ENCODE measurements at regions of chr17 and their contacts with region 1.

Region 1: DNA sequence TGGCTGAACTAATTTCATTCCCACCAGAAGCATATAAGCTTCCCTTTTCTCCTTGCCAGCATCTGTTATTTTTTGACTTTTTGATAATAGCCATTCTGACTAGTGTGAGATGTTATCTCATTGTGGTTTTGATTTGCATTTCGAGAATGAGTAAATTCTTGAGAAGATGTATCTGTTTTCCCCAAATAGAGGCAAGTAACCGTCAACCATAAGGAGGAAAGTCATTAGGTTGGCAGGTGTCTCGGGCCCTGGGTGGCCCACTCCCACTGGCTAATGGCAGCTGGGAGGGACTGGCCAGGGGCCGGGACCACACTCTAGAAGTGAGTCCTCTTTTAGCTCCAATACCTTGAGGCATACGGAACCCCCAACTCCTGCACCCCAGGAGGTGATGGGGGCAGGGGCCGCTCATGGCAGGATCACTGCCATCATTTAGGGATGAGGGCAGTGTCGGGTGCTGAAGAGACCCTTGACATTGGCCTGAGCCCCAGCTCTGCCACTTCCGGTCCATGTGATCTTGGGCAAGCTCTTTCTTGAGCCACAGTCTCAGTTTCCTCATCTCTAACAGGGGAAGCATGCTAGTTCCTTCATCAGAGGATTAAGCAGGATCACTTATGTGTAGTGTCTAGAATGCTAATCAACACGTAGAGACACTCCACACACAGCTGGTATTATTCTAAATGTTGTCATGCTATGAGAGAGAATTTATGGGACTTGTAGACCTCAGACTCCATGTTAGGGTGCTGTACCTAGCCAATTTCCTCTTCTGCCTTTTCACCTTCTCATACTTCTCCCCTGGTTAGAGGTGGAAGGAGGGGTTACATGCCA is 44.3 kb downstream of the RGS9 start:
- DNase-seq: peak; percentile 69
- H3K4me3 Mint-ChIP-seq: peak overlapping the region; percentile 29
- H3K27ac Mint-ChIP-seq: peak overlapping the region; percentile 98
- H3K4me1 Mint-ChIP-seq: peaks cover 88% of the 10 kb centered on the region
- H3K27me3 Mint-ChIP-seq: no peaks in the 10 kb centered on the region

Region 2: DNA sequence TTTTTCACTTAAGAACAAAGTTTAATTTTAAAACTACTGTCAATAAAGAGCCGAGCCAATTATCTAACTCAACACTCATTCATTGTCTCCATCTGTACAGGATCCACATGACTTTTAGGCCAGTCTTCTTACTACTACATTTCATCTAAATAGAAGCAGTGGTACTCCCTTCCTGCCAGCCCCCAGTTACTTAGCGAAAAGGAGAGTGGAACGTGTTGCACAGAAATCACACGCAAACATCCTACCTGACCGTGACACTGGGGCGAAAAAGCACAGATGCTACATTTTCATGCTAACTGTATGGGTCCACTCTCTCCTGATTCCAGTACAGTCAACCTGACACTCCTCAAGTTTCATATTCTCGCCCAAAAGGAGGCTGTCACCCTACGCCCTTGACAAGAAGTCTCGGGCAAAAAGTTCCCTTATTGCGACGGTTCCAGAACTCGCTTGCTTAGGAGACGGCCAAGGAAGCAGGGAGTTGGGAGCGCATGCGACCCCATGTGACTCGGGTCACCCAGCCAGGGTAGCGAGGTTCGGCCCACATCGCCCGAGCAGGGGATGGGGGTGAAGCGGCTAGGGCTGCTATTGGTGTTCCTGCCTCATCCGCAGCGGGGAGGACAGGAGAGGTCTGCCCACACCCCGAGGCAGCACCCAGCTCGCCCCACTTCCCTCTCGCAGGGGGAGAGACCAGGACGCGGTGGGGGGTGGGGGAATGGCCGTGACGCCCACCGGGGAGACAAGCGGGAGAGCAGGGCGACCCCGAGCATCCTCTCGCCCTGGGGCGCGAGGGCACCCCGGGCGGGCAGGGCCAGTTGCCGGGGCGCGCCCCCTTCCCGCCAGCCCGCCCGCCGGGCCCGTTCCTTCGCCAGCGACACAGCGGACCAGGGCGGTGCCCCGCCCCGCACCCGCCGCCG is 125.8 kb before region 1 on chr17:
- CTCF ChIA-PET with region 1: no interaction called
- POLR2A ChIA-PET with region 1: interaction called, 29 read pairs
- DNase-seq: peak; percentile 57
- H3K4me3 Mint-ChIP-seq: peak overlapping the region; percentile 96
- H3K27ac Mint-ChIP-seq: peak overlapping the region; percentile 91
- H3K4me1 Mint-ChIP-seq: peaks cover 51% of the 10 kb centered on the region
- H3K27me3 Mint-ChIP-seq: peaks cover 2% of the 10 kb centered on the region

Region 3: GRCh38 chr17:65137021-65137991 is 44.1 kb before region 1 on chr17 and contains the start of gene RGS9:
- CTCF ChIA-PET with region 1: interaction called, 23 read pairs
- POLR2A ChIA-PET with region 1: interaction called, 69 read pairs
- DNase-seq: peak; percentile 90
- H3K4me3 Mint-ChIP-seq: peak within 1 kb of the TSS; percentile 84
- H3K27ac Mint-ChIP-seq: peak within 1 kb of the TSS; percentile 41
- H3K4me1 Mint-ChIP-seq: peaks cover 51% of the 10 kb centered on the region
- H3K27me3 Mint-ChIP-seq: no peaks in the 10 kb centered on the region
- total RNA-seq, gene RGS9: 30.4 to 31.2 TPM

Region 4: DNA sequence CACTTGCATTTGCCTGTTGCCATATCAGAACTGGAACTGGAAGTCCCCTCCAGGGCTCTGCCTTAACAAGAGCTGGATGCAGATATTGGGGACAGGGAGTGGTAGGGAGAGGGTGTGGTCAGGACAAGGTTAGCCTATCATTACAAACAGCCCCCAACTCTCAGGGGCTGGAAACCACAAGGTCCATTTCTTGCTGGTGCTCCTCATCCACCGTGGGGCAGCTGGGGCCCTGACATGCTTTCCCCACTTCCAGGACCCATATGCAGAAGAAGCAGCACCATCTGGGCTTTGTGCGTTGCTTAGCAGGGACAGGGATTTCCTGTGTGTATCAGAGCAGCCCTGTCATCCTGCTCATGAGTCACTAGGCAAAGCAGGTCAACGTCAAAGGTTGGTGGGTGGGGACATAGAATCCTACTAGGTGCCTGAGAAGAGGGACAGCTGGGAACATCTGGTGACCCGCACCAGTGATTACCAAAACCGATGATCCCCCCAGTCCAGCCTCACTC is 17.4 kb before region 1 on chr17:
- CTCF ChIA-PET with region 1: interaction called, 3 read pairs
- POLR2A ChIA-PET with region 1: interaction called, 38 read pairs
- DNase-seq: peak; percentile 77
- H3K4me3 Mint-ChIP-seq: no peak overlapping the region
- H3K27ac Mint-ChIP-seq: peak overlapping the region; percentile 48
- H3K4me1 Mint-ChIP-seq: peaks cover 27% of the 10 kb centered on the region
- H3K27me3 Mint-ChIP-seq: no peaks in the 10 kb centered on the region

Region 5: GRCh38 chr17:65198653-65199382 is 17.4 kb after region 1 on chr17:
- CTCF ChIA-PET with region 1: interaction called, 13 read pairs
- POLR2A ChIA-PET with region 1: interaction called, 30 read pairs
- DNase-seq: peak; percentile 22
- H3K4me3 Mint-ChIP-seq: no peak overlapping the region
- H3K27ac Mint-ChIP-seq: no peak overlapping the region
- H3K4me1 Mint-ChIP-seq: peaks cover 35% of the 10 kb centered on the region
- H3K27me3 Mint-ChIP-seq: peaks cover 1% of the 10 kb centered on the region